Activated CD8-positive, alpha-beta T cell treated with anti-CD3 and anti-CD28 coated beads, Interleukin-2, amount 10 ng/mL, durations not matched to agents 7 days and 5 days (primary cell): ENCODE measurements at regions of chr16 and their contacts with region 1.

Region 1: DNA sequence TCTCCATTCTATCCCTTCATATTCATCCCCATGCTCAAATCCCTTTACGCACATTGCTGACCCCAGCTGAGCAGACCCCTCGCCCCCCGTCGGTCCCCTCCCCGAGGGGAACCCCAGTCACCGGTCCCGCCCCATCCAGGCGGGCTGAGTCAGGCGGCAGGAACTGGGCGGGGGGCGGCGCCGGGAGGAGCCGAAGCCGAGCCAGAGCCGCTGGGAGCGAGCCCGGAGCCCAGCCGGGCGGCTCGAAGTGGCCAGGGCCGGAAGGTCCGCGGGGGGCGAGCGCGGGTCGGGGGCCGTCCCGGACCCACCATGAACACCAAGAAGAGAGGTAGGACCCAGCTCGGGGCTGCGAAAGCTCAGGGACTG is 8.6 kb downstream of the RIPOR1 start:
- DNase-seq: peak; percentile 46
- ATAC-seq: peak; percentile 47
- H3K4me3 Mint-ChIP-seq: peak overlapping the region; percentile 69
- H3K27ac Mint-ChIP-seq: peak overlapping the region; percentile 25
- H3K4me1 Mint-ChIP-seq: peaks cover 10% of the 10 kb centered on the region
- H3K27me3 Mint-ChIP-seq: peaks cover 34% of the 10 kb centered on the region

Region 2: GRCh38 chr16:67173808-67174705 is 363.2 kb before region 1 on chr16:
- CTCF ChIA-PET with region 1: no interaction called
- POLR2A ChIA-PET with region 1: no interaction called
- DNase-seq: peak; percentile 76
- ATAC-seq: peak; percentile 77
- H3K4me3 Mint-ChIP-seq: peak overlapping the region; percentile 74
- H3K27ac Mint-ChIP-seq: peak overlapping the region; percentile 47
- H3K4me1 Mint-ChIP-seq: peaks cover 67% of the 10 kb centered on the region
- H3K27me3 Mint-ChIP-seq: peaks cover 42% of the 10 kb centered on the region

Region 3: DNA sequence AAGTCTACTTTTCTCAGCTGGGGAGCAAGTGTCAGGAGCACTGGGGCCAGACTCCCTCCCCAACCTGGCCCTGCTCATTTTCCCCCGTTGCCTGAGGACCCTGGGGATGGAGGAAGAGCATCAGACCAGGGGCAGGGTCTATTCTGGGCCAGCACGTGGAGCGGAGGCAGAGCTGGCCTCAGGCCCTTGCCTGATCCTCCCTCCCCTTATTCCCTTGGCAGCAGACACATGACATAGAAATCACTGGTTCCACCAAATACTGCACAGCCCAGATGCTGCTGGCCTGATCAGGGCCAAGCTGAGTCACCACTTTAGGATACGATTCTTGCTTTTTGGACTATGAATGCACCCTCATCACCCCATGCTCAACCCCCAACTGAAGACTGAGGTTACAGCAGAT is 38.1 kb before region 1 on chr16:
- CTCF ChIA-PET with region 1: interaction called, 12 read pairs
- POLR2A ChIA-PET with region 1: no interaction called
- DNase-seq: no peak
- ATAC-seq: no peak
- H3K4me3 Mint-ChIP-seq: no peak overlapping the region
- H3K27ac Mint-ChIP-seq: peak overlapping the region; percentile 34
- H3K4me1 Mint-ChIP-seq: peaks cover 13% of the 10 kb centered on the region
- H3K27me3 Mint-ChIP-seq: no peaks in the 10 kb centered on the region

Region 4: DNA sequence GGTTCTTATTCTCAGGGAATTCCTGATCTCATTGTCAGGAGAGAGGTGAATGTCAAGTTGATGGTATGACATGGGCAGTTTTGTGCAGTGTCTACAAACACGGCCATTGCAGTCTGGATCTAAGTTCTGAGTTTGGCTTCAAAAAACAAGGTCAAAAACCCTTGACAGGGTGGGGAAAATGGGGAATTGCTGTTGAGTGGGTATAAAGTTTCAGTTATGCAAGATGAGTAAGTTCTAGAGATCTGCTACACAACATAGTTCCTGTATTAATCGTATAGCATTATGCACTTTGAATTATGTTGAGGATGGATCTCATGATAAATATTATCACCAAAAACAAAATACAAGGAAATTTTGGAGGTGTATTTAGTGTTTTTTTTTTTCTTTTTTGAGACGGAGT is 71.1 kb after region 1 on chr16:
- CTCF ChIA-PET with region 1: no interaction called
- POLR2A ChIA-PET with region 1: no interaction called
- DNase-seq: no peak
- ATAC-seq: no peak
- H3K4me3 Mint-ChIP-seq: no peak overlapping the region
- H3K27ac Mint-ChIP-seq: no peak overlapping the region
- H3K4me1 Mint-ChIP-seq: no peaks in the 10 kb centered on the region
- H3K27me3 Mint-ChIP-seq: no peaks in the 10 kb centered on the region